Right ventricle myocardium inferior (tissue), 1 donor: ENCODE measurements at regions of chr16 and their contacts with region 1.

Region 1: GRCh38 chr16:4253394-4254150 is 11.7 kb upstream of the SRL start:
- DNase-seq: peak; percentile 100
- ATAC-seq: peak; percentile 99

Region 2: GRCh38 chr16:3983081-3983520 is 270.5 kb before region 1 on chr16:
- intact Hi-C with region 1: loop called (anchors 2 kb)
- DNase-seq: peak; percentile 76
- ATAC-seq: peak; percentile 90

Region 3: GRCh38 chr16:4053301-4053845 is 200.2 kb before region 1 on chr16:
- intact Hi-C with region 1: loop called (anchors 5 kb)
- DNase-seq: peak; percentile 80
- ATAC-seq: peak; percentile 77

Region 4: DNA sequence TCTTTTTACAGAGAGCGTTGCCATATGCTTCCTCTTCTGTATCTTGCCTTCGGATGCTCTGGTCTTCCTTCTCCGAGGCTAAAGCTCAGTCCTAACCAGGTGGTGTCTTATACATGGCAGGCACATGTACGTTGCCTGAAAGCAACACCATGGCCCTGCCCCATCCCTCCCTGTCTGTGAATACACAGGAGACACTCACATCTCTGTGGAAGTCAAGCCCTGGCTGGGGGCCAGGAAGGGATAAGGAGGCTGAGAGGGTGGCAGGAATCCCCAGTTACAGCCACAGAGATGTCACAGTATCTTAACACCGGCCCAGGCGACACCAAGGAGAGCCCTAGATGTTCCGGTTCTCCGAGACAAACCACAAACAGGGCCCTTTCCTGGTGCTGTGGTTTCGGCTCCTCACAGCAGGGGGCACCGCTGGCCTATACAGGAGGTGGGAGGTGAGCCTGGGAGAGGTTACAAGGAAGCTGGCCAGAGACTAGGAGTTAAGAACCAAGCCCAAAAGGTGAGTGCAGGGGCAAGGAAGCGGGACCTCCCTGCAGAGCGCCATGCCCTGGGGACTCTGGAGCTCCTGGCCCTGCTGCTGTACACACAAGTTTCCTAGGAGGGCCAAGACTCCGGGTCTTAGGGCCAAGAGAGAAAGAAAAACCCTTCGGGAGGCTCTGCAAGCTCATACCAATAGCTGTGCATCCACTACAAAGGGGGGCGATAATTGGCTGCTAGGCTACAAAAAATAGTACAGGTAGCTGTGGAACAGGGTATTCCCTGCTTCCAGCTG is 53.4 kb before region 1 on chr16:
- intact Hi-C with region 1: loop called (anchors 2 kb)
- DNase-seq: no peak
- ATAC-seq: peak; percentile 79